Naive thymus-derived CD8-positive, alpha-beta T cell (primary cell): ENCODE measurements at regions of chr22 and their contacts with region 1.

Region 1: DNA sequence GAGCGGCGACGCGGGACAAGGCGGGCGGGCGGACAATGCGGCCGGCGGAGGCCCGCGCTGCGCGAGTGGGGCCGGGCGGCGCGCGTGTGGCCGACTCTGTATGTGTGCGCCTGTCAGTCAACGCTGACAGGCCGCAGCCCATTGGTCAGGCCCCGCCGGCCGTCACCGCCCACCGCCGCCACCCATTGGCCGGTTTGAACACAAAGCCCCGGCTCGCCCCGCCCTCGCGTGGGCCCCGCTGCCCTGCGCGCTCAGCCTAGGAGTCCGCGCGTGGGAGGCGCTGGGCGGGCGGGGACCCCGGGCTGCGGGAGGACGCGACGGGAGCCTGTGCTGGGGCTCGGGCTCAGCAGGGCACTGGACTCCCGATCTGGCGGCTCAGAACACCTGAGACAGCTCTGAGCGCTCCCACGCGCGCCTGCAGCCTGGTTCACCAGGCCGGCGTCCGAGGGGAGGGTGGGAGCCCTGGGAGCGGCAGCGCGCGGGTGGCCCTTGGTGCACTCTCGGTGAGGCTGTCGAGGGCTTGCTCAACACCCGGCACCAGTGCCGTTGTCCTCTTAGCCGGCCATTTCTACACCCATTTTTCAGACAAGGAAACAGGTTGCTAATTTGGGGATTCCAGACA is at the start of gene SUN2:
- DNase-seq: peak; percentile 90 to 96 (median 94)
- ATAC-seq: peak; percentile 67 to 71
- H3K4me3 Mint-ChIP-seq: peak within 1 kb of the TSS; percentile 94 to 100 (median 99)
- H3K27ac Mint-ChIP-seq: peak within 1 kb of the TSS; percentile 90 to 100 (median 99)
- H3K4me1 Mint-ChIP-seq: peaks cover 41 to 77% (median 65%) of the 10 kb centered on the region in 4 donors
- H3K27me3 Mint-ChIP-seq: no peaks in the 10 kb centered on the region
- polyA plus RNA-seq, gene SUN2: 491 to 802 (median 518) TPM

Region 2: DNA sequence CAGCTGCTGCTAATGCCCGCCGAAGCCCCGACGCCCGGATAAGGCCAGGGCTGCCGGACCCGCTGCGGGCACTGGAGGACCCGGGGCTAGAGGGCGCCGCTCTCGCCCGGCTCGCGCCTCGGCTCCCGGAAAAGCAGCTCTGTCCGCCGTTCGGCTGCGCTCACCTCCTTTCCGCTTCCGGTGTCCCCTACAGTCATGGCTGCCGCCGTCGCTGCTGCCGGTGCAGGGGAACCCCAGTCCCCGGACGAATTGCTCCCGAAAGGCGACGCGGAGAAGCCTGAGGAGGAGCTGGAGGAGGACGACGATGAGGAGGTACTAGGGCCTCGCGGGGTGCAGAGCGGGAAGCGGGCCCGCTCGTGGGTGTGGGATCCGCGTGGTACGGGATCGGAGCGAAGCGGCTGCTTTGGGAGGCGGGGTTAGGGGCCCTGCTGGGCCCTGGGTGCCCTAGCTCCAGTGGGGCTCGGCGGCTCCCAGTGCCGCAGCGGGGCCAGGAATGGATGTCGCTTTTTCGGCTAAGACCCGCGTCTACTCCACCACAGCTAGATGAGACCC is 74.2 kb before region 1 on chr22 and contains the start of gene TOMM22:
- POLR2A ChIA-PET with region 1: interaction called, 19 read pairs
- DNase-seq: peak; percentile 67 to 89 (median 80)
- ATAC-seq: peak; percentile 94
- H3K4me3 Mint-ChIP-seq: peak within 1 kb of the TSS; percentile 88 to 99 (median 98)
- H3K27ac Mint-ChIP-seq: peak within 1 kb of the TSS; percentile 94 to 99 (median 99)
- H3K4me1 Mint-ChIP-seq: peaks cover 13 to 24% (median 18%) of the 10 kb centered on the region in 4 donors
- H3K27me3 Mint-ChIP-seq: no peaks in the 10 kb centered on the region
- polyA plus RNA-seq, gene TOMM22: 67.2 to 79.3 (median 75.9) TPM

Region 3: GRCh38 chr22:38705235-38706100 is 50.6 kb before region 1 on chr22 and contains the start of gene GTPBP1:
- POLR2A ChIA-PET with region 1: interaction called, 23 read pairs
- DNase-seq: peak; percentile 87 to 99 (median 98)
- ATAC-seq: peak; percentile 78 to 79
- H3K4me3 Mint-ChIP-seq: peak within 1 kb of the TSS; percentile 85 to 95 (median 90)
- H3K27ac Mint-ChIP-seq: peak within 1 kb of the TSS; percentile 83 to 99 (median 98)
- H3K4me1 Mint-ChIP-seq: peaks cover 26 to 66% (median 60%) of the 10 kb centered on the region in 4 donors
- H3K27me3 Mint-ChIP-seq: peaks cover 0 to 3% (median 0%) of the 10 kb centered on the region in 5 donors
- polyA plus RNA-seq, gene GTPBP1: 17.2 to 29.3 (median 22.6) TPM

Region 4: GRCh38 chr22:38782402-38783094 is 26.5 kb after region 1 on chr22:
- POLR2A ChIA-PET with region 1: no interaction called
- DNase-seq: no peak
- ATAC-seq: no peak
- H3K4me3 Mint-ChIP-seq: no peak overlapping the region
- H3K27ac Mint-ChIP-seq: peak overlapping the region in 4 of 10 donors; percentile 50 to 83 (median 60)
- H3K4me1 Mint-ChIP-seq: peaks cover 2 to 16% (median 11%) of the 10 kb centered on the region in 4 donors
- H3K27me3 Mint-ChIP-seq: no peaks in the 10 kb centered on the region

Region 5: GRCh38 chr22:38792833-38793232 is 36.8 kb after region 1 on chr22:
- POLR2A ChIA-PET with region 1: interaction called, 15 read pairs
- DNase-seq: no peak
- ATAC-seq: no peak
- H3K4me3 Mint-ChIP-seq: peak overlapping the region; percentile 85 to 95 (median 91)
- H3K27ac Mint-ChIP-seq: peak overlapping the region; percentile 82 to 97 (median 96)
- H3K4me1 Mint-ChIP-seq: peaks cover 12 to 28% (median 19%) of the 10 kb centered on the region in 4 donors
- H3K27me3 Mint-ChIP-seq: peaks cover 0 to 14% (median 3%) of the 10 kb centered on the region in 5 donors

Region 6: DNA sequence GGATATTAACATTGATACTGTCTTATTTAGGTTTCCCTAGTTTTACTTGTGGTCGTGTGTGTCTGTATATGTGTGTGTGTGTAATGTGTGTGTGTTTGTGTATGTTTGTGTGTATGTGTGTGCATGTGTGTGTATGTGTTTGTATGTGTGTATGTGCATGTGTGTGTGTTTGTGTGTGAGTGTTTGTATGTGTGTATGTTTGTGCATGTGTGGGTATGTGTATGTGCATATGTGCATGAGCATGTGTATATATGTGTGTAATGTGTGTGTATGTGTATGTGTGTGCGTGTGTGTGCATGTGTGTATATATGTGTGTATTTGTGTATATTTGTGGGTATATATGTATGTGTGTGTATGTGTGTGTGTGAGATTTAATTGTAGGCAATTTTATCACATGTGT is 55.2 kb after region 1 on chr22:
- POLR2A ChIA-PET with region 1: no interaction called
- DNase-seq: no peak
- ATAC-seq: no peak
- H3K4me3 Mint-ChIP-seq: no peak overlapping the region
- H3K27ac Mint-ChIP-seq: no peak overlapping the region
- H3K4me1 Mint-ChIP-seq: peaks cover 0 to 4% (median 0%) of the 10 kb centered on the region in 4 donors
- H3K27me3 Mint-ChIP-seq: peaks cover 5 to 25% (median 9%) of the 10 kb centered on the region in 5 donors

Region 7: GRCh38 chr22:38843201-38843715 is 87.2 kb after region 1 on chr22:
- POLR2A ChIA-PET with region 1: interaction called, 50 read pairs
- DNase-seq: peak; percentile 39 to 79 (median 53)
- ATAC-seq: peak; percentile 85 to 88
- H3K4me3 Mint-ChIP-seq: peak overlapping the region in 2 of 10 donors; percentile 22 to 85
- H3K27ac Mint-ChIP-seq: no peak overlapping the region
- H3K4me1 Mint-ChIP-seq: peaks cover 19 to 32% (median 28%) of the 10 kb centered on the region in 4 donors
- H3K27me3 Mint-ChIP-seq: peaks cover 0 to 24% (median 6%) of the 10 kb centered on the region in 5 donors